Activated T-helper 2 cell treated with anti-CD3 and anti-CD28 coated beads, Interferon-gamma antibody, Interleukin-2, Interleukin-4, amounts not matched to agents 10 μg/mL and 5 μg/mL and 100 μg/mL, durations not matched to agents 14 hours and 24 hours and 36 hours (primary cell): ENCODE measurements at regions of chr7 and their contacts with region 1.

Region 1: GRCh38 chr7:11120068-11120664 is 146.5 kb downstream of the PHF14 start:
- DNase-seq: no peak
- H3K4me3 Mint-ChIP-seq: peak overlapping the region; percentile 37
- H3K27ac Mint-ChIP-seq: peak overlapping the region; percentile 79
- H3K4me1 Mint-ChIP-seq: peaks cover 40% of the 10 kb centered on the region
- H3K27me3 Mint-ChIP-seq: no peaks in the 10 kb centered on the region

Region 2: DNA sequence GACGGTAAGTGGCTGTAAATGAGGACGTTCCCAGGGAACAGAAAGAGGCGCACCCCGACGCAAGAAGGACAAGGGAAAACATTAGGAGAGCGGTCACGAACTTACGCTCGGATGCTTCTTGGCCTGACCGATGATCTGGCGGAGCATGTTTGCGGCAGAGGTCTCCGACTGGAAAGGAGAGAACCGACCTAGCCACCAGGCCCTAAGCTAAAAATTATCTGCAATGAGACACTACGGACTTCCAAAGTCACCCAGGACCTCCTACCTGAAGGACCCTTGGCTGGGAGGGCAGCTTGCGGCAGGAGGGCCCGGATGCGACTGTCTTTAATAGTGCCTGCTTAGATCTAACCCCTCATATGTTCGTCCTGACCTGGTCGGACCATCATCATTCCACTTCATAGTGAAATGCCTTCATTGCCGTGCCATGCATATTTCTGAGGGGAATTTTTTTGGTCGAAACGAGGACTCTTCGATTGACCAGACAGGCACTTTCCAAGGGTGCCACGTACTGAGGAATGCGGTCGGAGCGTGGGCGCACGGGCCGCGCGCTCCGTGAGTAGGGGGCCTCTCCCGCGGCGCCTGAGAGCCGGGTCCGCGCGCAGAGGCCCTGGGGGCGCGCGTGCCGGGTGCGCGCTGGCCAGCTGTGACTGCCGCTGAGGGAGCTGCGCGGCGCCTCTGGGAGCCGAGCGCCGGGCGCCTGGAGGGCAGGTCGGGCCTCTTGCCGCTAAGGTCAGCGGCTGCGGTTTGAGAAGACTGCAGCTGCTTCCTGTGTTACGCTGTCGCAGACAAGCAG is 180.1 kb before region 1 on chr7:
- intact Hi-C with region 1: loop called (anchors 1 kb)
- DNase-seq: peak; percentile 82
- H3K4me3 Mint-ChIP-seq: no peak overlapping the region
- H3K27ac Mint-ChIP-seq: no peak overlapping the region
- H3K4me1 Mint-ChIP-seq: peaks cover 14% of the 10 kb centered on the region
- H3K27me3 Mint-ChIP-seq: no peaks in the 10 kb centered on the region

Region 3: GRCh38 chr7:11272352-11272751 is 152.2 kb after region 1 on chr7:
- intact Hi-C with region 1: no loop called
- DNase-seq: no peak
- H3K4me3 Mint-ChIP-seq: no peak overlapping the region
- H3K27ac Mint-ChIP-seq: no peak overlapping the region
- H3K4me1 Mint-ChIP-seq: no peaks in the 10 kb centered on the region
- H3K27me3 Mint-ChIP-seq: no peaks in the 10 kb centered on the region